Activated CD4-positive, alpha-beta memory T cell treated with anti-CD3 and anti-CD28 coated beads, Interleukin-2, amount 10 ng/mL, durations not matched to agents 7 days and 5 days (primary cell): ENCODE measurements at regions of chr2 and their contacts with region 1.

Region 1: GRCh38 chr2:42086500-42086953 is 38.7 kb downstream of the PKDCC start:
- DNase-seq: peak; percentile 44
- H3K4me3 Mint-ChIP-seq: no peak overlapping the region
- H3K27ac Mint-ChIP-seq: no peak overlapping the region
- H3K4me1 Mint-ChIP-seq: peaks cover 9% of the 10 kb centered on the region
- H3K27me3 Mint-ChIP-seq: peaks cover 23% of the 10 kb centered on the region

Region 2: GRCh38 chr2:41853427-41854216 is 232.9 kb before region 1 on chr2:
- CTCF ChIA-PET with region 1: interaction called, 49 read pairs
- POLR2A ChIA-PET with region 1: no interaction called
- DNase-seq: no peak
- H3K4me3 Mint-ChIP-seq: no peak overlapping the region
- H3K27ac Mint-ChIP-seq: no peak overlapping the region
- H3K4me1 Mint-ChIP-seq: no peaks in the 10 kb centered on the region
- H3K27me3 Mint-ChIP-seq: peaks cover 17% of the 10 kb centered on the region

Region 3: GRCh38 chr2:41869542-41870264 is 216.8 kb before region 1 on chr2:
- CTCF ChIA-PET with region 1: interaction called, 278 read pairs
- POLR2A ChIA-PET with region 1: interaction called, 7 read pairs
- DNase-seq: peak; percentile 73
- H3K4me3 Mint-ChIP-seq: no peak overlapping the region
- H3K27ac Mint-ChIP-seq: no peak overlapping the region
- H3K4me1 Mint-ChIP-seq: peaks cover 18% of the 10 kb centered on the region
- H3K27me3 Mint-ChIP-seq: peaks cover 16% of the 10 kb centered on the region

Region 4: GRCh38 chr2:42274863-42275262 is 188.3 kb after region 1 on chr2:
- CTCF ChIA-PET with region 1: no interaction called
- POLR2A ChIA-PET with region 1: no interaction called
- DNase-seq: no peak
- H3K4me3 Mint-ChIP-seq: no peak overlapping the region
- H3K27ac Mint-ChIP-seq: no peak overlapping the region
- H3K4me1 Mint-ChIP-seq: no peaks in the 10 kb centered on the region
- H3K27me3 Mint-ChIP-seq: no peaks in the 10 kb centered on the region